ENCODE measurements at regions of chr10 and their contacts with region 1.

Region 1: DNA sequence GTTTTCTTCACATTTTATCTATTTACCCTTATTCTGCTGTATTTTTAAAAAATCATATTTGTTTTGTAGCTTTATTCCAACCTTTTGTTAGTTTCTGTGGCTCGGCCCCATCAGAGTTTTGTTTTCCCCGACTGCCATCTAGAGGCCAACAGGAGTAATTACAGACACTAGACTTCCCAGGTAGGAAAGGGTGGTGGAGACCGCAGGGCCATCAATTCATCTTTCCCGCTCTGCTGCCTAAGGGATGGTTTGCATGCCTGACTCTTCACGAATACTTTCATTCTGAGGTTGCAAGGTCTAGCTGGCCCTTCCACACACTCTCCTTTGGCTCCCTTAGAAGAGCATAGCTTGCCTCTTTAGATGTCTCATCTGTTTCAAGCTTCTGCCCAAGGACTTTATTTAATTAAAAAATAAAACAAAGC is 38.3 kb downstream of the LYZL2 start:
- DNase-seq: peak; percentile 48 to 67
- ATAC-seq: peak; percentile 77 to 83
- H3K4me3 ChIP-seq: no peak overlapping the region
- H3K27ac ChIP-seq: peak overlapping the region; percentile 35 to 76; a peak in 5 of 6 replicates
- H3K4me1 ChIP-seq: 0 out of 3 replicates have a peak, but pooled peaks cover 5% of the 10 kb centered on the region
- CTCF ChIP-seq: peak; percentile 86
- EP300 ChIP-seq: no peak
- POLR2A ChIP-seq: no peak
- RAD21 ChIP-seq: peak; percentile 86 to 93

Region 2: GRCh38 chr10:30384701-30385201 is 206.5 kb before region 1 on chr10:
- CTCF ChIA-PET with region 1: interaction called, 216 read pairs
- POLR2A ChIA-PET with region 1: no interaction called
- DNase-seq: peak; percentile 58 to 67
- ATAC-seq: peak; percentile 94 to 95
- H3K4me3 ChIP-seq: no peak overlapping the region
- H3K27ac ChIP-seq: no peak overlapping the region
- H3K4me1 ChIP-seq: no peaks in the 10 kb centered on the region
- CTCF ChIP-seq: peak; percentile 36
- EP300 ChIP-seq: no peak
- POLR2A ChIP-seq: no peak
- RAD21 ChIP-seq: peak; percentile 28 to 36; a peak in 3 of 5 replicates

Region 3: GRCh38 chr10:30404540-30404939 is 186.7 kb before region 1 on chr10:
- CTCF ChIA-PET with region 1: interaction called, 56 read pairs
- POLR2A ChIA-PET with region 1: no interaction called
- DNase-seq: no peak
- ATAC-seq: no peak
- H3K4me3 ChIP-seq: no peak overlapping the region
- H3K27ac ChIP-seq: no peak overlapping the region
- H3K4me1 ChIP-seq: 0 out of 3 replicates have a peak, but pooled peaks cover 9% of the 10 kb centered on the region
- CTCF ChIP-seq: no peak
- EP300 ChIP-seq: no peak
- POLR2A ChIP-seq: no peak
- RAD21 ChIP-seq: no peak

Region 4: GRCh38 chr10:30459283-30459682 is 132.0 kb before region 1 on chr10:
- CTCF ChIA-PET with region 1: interaction called, 10 read pairs
- POLR2A ChIA-PET with region 1: no interaction called
- DNase-seq: no peak
- ATAC-seq: peak in 1 of 2 experiments; percentile 13; a peak in 3 of 6 replicates
- H3K4me3 ChIP-seq: no peak overlapping the region
- H3K27ac ChIP-seq: no peak overlapping the region; a peak in 1 of 6 replicates
- H3K4me1 ChIP-seq: peaks cover 35% of the 10 kb centered on the region
- CTCF ChIP-seq: no peak
- EP300 ChIP-seq: no peak
- POLR2A ChIP-seq: no peak
- RAD21 ChIP-seq: no peak

Region 5: DNA sequence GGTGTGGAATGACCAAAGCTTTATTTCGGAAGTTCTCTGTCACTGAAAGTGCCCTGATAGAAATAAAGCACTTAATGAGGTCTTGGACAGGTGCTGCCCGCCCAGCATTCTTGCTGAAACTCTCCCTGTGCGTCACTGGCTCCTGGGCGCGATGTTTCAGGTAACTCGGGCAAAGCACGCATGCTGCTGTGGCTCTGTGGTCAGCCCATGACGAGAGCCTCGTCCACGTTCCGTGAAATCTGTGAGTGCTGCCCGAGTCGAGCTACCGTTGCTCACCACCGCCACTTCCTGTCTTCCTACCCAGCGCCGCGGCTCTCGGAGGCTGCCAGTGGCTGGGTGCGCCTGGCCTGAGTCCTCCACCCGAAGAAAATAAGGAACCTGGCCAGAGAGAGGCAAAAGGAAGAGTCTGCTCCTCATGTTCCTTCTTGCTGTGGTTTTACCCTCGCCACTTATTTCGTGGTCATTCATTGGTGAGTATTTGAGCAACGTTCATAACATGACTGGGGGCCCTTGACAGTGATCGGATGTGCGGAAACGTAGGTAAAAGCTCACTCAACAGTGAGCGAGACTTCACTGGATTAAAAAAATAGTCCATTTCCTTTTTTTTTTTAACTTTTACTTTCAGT is 61.8 kb before region 1 on chr10:
- CTCF ChIA-PET with region 1: interaction called, 23 read pairs
- POLR2A ChIA-PET with region 1: no interaction called
- DNase-seq: no peak
- ATAC-seq: no peak
- H3K4me3 ChIP-seq: no peak overlapping the region
- H3K27ac ChIP-seq: peak overlapping the region in 1 of 2 experiments; percentile 68; a peak in 3 of 6 replicates
- H3K4me1 ChIP-seq: peaks cover 21% of the 10 kb centered on the region
- CTCF ChIP-seq: no peak
- EP300 ChIP-seq: no peak
- POLR2A ChIP-seq: no peak
- RAD21 ChIP-seq: no peak

Region 6: DNA sequence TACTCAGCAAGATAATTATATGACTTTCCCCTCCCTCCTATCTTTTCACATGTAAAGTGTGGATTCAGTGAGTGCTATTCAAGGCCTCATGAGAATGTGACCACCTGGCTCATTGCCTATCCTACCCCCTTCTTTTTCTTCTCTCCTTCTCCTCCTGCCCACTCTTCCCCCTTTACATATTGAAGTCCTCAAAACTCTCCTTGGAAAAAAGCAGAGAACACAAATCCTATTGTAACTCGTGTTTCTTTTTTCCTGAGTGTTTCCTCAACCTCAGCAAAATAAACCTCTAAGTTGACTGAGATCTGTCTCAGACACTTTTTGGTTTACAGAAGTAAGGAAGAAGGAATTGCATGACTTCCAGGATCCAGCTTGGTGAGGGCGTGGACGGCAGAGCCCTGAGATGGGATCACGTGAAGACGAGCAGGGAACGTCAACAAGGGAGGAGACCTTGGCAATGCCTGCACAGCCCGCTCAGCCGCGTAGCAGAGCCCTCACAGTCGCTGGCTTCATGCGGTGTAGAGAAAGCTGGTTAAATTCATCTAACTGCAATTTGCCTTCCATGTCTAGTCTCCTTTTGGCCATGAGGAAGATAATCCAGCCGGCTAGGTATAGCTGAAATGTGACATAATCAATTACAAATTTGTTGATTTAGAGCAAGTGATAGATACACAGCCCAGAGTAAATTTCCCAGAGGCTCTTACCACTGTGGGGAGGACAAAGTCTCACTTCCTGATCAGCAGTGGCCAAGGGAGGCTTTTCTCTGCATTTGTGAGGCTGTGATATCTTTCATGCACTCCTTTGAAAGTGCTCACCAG is 37.4 kb before region 1 on chr10:
- CTCF ChIA-PET with region 1: interaction called, 19 read pairs
- POLR2A ChIA-PET with region 1: no interaction called
- DNase-seq: peak; percentile 41 to 52
- ATAC-seq: peak; percentile 39 to 83; a peak in 3 of 6 replicates
- H3K4me3 ChIP-seq: no peak overlapping the region
- H3K27ac ChIP-seq: peak overlapping the region; percentile 48 to 87
- H3K4me1 ChIP-seq: peaks cover 19% of the 10 kb centered on the region
- CTCF ChIP-seq: no peak
- EP300 ChIP-seq: no peak
- POLR2A ChIP-seq: no peak
- RAD21 ChIP-seq: no peak

Region 7: GRCh38 chr10:30639946-30640786 is 48.9 kb after region 1 on chr10:
- CTCF ChIA-PET with region 1: interaction called, 16 read pairs
- POLR2A ChIA-PET with region 1: no interaction called
- DNase-seq: peak; percentile 49 to 77
- ATAC-seq: 0 out of 6 replicates have a peak, but pooled peaks of 1 of the 2 experiments have one; percentile 41
- H3K4me3 ChIP-seq: no peak overlapping the region
- H3K27ac ChIP-seq: no peak overlapping the region
- H3K4me1 ChIP-seq: peaks cover 16% of the 10 kb centered on the region
- CTCF ChIP-seq: peak; percentile 77
- EP300 ChIP-seq: no peak
- POLR2A ChIP-seq: no peak
- RAD21 ChIP-seq: peak; percentile 42 to 59; a peak in 4 of 5 replicates

Region 8: GRCh38 chr10:30671026-30671616 is 79.9 kb after region 1 on chr10:
- CTCF ChIA-PET with region 1: no interaction called
- POLR2A ChIA-PET with region 1: no interaction called
- DNase-seq: peak; percentile 33 to 84
- ATAC-seq: peak; percentile 81 to 93
- H3K4me3 ChIP-seq: no peak overlapping the region
- H3K27ac ChIP-seq: 0 out of 6 replicates have a peak overlapping the region, but pooled peaks of 1 of the 2 experiments have one; percentile 1
- H3K4me1 ChIP-seq: 0 out of 3 replicates have a peak, but pooled peaks cover 5% of the 10 kb centered on the region
- CTCF ChIP-seq: peak; percentile 87
- EP300 ChIP-seq: no peak
- POLR2A ChIP-seq: no peak
- RAD21 ChIP-seq: peak; percentile 69 to 77

Region 9: GRCh38 chr10:31064348-31064747 is 473.1 kb after region 1 on chr10:
- CTCF ChIA-PET with region 1: no interaction called
- POLR2A ChIA-PET with region 1: no interaction called
- DNase-seq: no peak
- ATAC-seq: no peak
- H3K4me3 ChIP-seq: no peak overlapping the region
- H3K27ac ChIP-seq: no peak overlapping the region
- H3K4me1 ChIP-seq: no peaks in the 10 kb centered on the region
- CTCF ChIP-seq: no peak
- EP300 ChIP-seq: no peak
- POLR2A ChIP-seq: no peak
- RAD21 ChIP-seq: no peak

Measured in A549 (cell line).